ENCODE measurements at regions of chr3 and their contacts with region 1.

Region 1: GRCh38 chr3:47522082-47522987 is 8.8 kb upstream of the ELP6 start:
- DNase-seq: peak; percentile 71
- H3K4me3 Mint-ChIP-seq: no peak overlapping the region
- H3K27ac Mint-ChIP-seq: peak overlapping the region; percentile 55
- H3K4me1 Mint-ChIP-seq: peaks cover 11% of the 10 kb centered on the region
- H3K27me3 Mint-ChIP-seq: no peaks in the 10 kb centered on the region

Region 2: DNA sequence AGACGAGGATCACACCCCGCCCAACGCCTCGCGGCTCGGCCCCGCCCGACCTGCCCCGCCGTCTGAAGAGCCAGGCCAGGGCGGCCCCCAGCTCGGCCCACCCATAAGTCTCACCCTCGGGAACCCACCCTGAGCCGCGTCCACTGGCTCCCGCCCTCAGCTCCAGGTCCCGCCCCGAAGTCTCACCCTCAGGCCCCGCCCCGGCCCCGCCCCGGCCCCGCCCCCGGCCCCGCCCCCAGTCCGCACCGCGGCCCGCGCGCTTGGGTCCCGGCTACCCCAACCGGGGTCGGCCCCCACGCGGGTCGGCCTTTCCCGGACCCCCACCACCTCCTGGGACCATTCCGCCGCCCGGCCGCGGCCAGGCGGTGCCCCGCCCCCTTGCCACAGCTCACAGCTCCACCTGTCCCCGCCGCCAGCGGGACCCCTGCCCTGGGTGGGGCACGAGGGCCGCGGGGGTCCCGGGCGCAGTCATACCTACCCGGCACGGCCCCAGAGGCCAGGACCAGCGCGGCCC is 55.8 kb after region 1 on chr3:
- intact Hi-C with region 1: loop called (anchors 2 kb)
- DNase-seq: peak; percentile 34
- H3K4me3 Mint-ChIP-seq: peak overlapping the region; percentile 53
- H3K27ac Mint-ChIP-seq: no peak overlapping the region
- H3K4me1 Mint-ChIP-seq: no peaks in the 10 kb centered on the region
- H3K27me3 Mint-ChIP-seq: peaks cover 32% of the 10 kb centered on the region

Region 3: GRCh38 chr3:47678446-47679338 is 156.4 kb after region 1 on chr3:
- intact Hi-C with region 1: loop called (anchors 10 kb)
- DNase-seq: no peak
- H3K4me3 Mint-ChIP-seq: no peak overlapping the region
- H3K27ac Mint-ChIP-seq: no peak overlapping the region
- H3K4me1 Mint-ChIP-seq: no peaks in the 10 kb centered on the region
- H3K27me3 Mint-ChIP-seq: no peaks in the 10 kb centered on the region

Region 4: DNA sequence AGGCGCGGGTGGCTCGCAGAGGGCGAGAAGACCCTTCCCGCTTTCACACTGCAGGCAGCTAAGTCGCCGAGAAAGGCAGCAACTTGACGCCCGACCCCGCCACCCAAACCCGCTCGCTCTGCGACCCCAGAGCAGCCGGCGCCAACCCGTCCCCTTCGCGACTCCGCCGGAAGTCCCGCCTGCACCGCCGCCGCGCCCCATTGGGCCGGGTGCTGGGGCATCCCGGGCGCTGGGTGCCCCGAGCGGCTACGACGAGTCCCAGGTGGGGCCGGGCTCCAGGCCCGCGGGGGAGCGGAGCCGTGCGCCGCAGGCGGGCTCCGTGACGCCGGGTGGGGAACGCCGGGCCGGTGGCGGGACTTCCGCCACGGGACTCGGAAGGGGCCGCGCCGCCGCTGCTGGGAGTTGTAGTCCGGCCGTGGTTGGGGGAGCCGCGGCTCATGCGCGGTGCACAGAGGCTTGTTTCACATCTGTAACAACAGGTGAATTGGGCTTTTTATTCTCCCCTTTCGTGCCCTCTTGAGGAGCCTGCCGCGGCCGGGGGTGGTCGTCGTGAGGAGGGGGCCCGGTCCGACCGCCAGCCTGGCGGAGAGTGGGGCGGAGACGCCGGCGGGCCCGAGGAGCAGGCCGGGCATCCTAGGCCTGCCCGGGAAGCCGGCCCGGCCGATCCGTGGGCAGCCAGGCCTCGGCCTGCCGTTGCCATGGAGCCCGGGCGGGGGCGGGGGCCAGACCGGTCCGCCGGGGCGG is 280.6 kb after region 1 on chr3 and contains the start of gene DHX30:
- intact Hi-C with region 1: loop called (anchors 1 kb)
- DNase-seq: peak; percentile 82
- H3K4me3 Mint-ChIP-seq: peak within 1 kb of the TSS; percentile 93
- H3K27ac Mint-ChIP-seq: peak within 1 kb of the TSS; percentile 95
- H3K4me1 Mint-ChIP-seq: peaks cover 19% of the 10 kb centered on the region
- H3K27me3 Mint-ChIP-seq: no peaks in the 10 kb centered on the region
- total RNA-seq, gene DHX30: 149 and 154 TPM in 2 replicates

Region 5: GRCh38 chr3:48151058-48151806 is 628.9 kb after region 1 on chr3:
- intact Hi-C with region 1: loop called (anchors 1 kb)
- DNase-seq: peak; percentile 49
- H3K4me3 Mint-ChIP-seq: no peak overlapping the region
- H3K27ac Mint-ChIP-seq: no peak overlapping the region
- H3K4me1 Mint-ChIP-seq: peaks cover 10% of the 10 kb centered on the region
- H3K27me3 Mint-ChIP-seq: no peaks in the 10 kb centered on the region

Measured in activated T-helper 1 cell treated with anti-CD3 and anti-CD28 coated beads, Interleukin-12 subunit alpha, Interleukin-12 subunit beta, Interleukin-2, Interleukin-4 antibody, amounts not matched to agents 30 ng/mL and 10 ng/mL and 1 ng/mL, durations not matched to agents 14 hours and 24 hours and 36 hours (primary cell).